Lower lobe of right lung (tissue), 2 donors: ENCODE measurements at regions of chr3 and their contacts with region 1.

Region 1: GRCh38 chr3:32022947-32023346 is 41.4 kb downstream of the ZNF860 start:
- DNase-seq: no peak
- ATAC-seq: no peak
- H3K4me3 ChIP-seq: no peak overlapping the region
- H3K27ac ChIP-seq: no peak overlapping the region
- H3K4me1 ChIP-seq: peaks cover 7% of the 10 kb centered on the region
- H3K27me3 ChIP-seq: no peaks in the 10 kb centered on the region
- CTCF ChIP-seq: no peak

Region 2: DNA sequence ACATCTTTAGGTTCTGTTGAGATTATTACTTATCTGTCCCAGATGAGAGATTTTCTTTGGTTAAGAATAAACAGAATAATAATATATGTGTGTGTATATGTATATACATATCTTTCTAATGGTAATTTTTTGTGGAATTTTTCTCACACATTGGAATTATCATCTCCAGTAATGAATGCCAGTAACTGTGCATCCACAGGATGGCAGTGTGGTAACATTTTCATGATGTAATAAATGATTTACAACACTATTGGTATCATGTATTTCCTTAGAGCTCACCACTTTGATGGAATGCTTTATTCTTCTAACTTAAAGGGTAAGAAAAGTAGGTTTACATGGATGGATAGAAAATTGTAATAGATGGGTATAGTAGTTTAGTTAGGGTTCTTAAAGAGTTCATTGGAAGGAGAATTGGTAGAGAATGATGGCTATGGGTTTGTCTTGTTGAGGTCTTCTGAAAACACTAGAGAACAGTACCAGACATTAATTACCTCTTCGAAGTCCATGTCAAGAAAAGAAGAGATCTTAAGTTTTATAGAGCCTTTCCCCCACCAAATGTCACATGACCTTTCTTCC is 412.2 kb before region 1 on chr3:
- intact Hi-C with region 1: no loop called
- DNase-seq: no peak
- ATAC-seq: peak; percentile 48 to 81
- H3K4me3 ChIP-seq: no peak overlapping the region
- H3K27ac ChIP-seq: no peak overlapping the region
- H3K4me1 ChIP-seq: peaks cover 13% of the 10 kb centered on the region
- H3K27me3 ChIP-seq: no peaks in the 10 kb centered on the region
- CTCF ChIP-seq: peak; percentile 64

Region 3: DNA sequence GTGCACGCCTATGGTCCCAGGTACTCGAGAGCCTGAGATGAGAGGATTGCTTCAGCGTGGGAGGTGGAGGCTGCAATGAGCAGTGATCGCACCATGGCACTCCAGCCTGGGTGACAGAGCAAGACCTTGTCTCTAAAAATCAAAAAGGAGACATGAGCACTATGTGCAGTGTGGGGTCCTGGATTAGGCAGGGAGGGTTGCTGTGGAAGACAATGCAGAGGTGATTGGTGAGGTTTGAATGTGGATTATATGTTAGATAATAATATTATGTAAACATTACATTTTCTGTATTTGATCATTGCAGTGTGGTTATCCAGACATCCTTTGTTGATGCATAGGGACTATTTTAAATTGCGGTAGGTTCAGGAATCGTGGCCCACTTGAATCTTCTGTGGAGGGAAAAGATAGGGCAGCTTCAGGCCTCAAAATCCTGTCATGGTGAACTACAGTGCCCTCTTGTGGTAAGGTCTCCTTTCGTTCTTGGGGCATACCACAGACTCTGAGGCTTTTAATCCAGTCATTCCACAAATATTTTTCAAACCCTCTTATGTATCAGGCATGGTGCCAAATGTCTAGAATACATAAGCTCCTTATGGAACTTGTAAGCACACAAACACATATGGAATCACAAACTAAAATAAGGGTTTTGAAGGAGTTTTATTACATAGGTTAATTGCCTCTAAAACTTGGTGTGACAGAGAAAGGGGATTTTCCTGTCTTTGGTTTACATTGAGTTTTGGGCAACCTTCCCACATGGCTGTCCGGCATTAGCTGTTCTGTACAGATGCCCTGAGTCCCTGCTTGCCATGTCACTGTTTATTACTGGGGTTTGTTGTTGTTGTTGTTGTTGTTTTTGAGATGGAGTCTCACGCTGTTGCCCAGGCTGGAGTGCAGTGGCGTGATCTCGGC is 121.2 kb after region 1 on chr3:
- intact Hi-C with region 1: loop called (anchors 5 kb)
- DNase-seq: no peak
- ATAC-seq: peak; percentile 83 to 91
- H3K4me3 ChIP-seq: no peak overlapping the region
- H3K27ac ChIP-seq: no peak overlapping the region
- H3K4me1 ChIP-seq: peaks cover 21% of the 10 kb centered on the region
- H3K27me3 ChIP-seq: no peaks in the 10 kb centered on the region
- CTCF ChIP-seq: peak; percentile 83

Region 4: GRCh38 chr3:32493437-32494414 is 470.8 kb after region 1 on chr3:
- intact Hi-C with region 1: no loop called
- DNase-seq: no peak
- ATAC-seq: peak in 1 of 2 donors; percentile 34
- H3K4me3 ChIP-seq: no peak overlapping the region
- H3K27ac ChIP-seq: no peak overlapping the region
- H3K4me1 ChIP-seq: peaks cover 33% of the 10 kb centered on the region
- H3K27me3 ChIP-seq: no peaks in the 10 kb centered on the region
- CTCF ChIP-seq: no peak